Pancreas (tissue), 10 donors: ENCODE measurements at regions of chr6 and their contacts with region 1.

Region 1: GRCh38 chr6:129730477-129731165 is 20.6 kb upstream of the ARHGAP18 start:
- DNase-seq: peak in 1 of 6 donors; percentile 30
- ATAC-seq: peak; percentile 58 to 83 (median 79)
- H3K4me3 ChIP-seq: no peak overlapping the region
- H3K27ac ChIP-seq: no peak overlapping the region
- H3K4me1 ChIP-seq: no peaks in the 10 kb centered on the region
- H3K27me3 ChIP-seq: no peaks in the 10 kb centered on the region
- CTCF ChIP-seq: peak; percentile 19 to 56 (median 46)

Region 2: DNA sequence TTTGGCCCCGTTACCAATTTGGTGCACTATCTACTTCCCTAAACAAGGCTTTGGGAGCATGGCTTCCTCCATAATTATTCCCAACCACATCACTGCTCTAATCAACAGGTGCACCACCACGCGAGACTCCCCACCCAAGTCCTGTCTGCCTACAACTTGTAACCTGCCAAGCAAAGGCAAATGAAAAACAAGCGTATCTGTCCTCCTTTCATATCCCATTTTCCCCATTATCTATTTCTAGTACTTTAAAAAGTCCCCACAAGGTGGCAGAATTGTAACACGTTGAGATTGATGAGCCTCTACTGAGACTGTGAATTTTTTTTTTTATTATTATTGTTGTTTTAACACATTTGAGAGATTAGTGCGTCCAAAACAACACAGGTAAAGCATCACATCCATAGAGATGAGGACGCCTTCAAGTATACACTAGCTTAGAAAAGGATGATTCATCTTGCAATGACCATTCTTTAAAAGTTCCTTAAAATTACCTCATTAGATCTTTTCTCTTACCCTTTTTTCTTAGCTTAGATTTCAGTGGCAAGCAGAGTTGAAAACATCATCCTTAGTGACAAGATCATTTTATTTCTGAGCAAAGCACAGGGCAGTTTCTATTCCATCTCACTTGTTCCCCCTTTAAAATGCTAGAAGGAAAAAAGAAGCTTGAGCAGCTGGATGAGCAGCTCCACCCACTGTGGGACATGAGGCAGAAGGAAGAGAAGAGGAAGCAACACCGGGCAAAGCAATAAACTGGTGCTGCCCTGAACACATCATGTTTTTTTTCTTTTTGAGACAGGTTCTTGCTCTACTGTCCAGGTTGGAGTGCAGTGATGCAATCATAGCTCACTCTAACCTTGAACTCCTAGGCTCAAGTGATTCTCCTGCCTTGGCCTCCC is 231.4 kb before region 1 on chr6:
- intact Hi-C with region 1: loop called in 1 of 3 experiments (anchors 5 kb)
- DNase-seq: no peak
- ATAC-seq: peak; percentile 74 to 86 (median 84)
- H3K4me3 ChIP-seq: no peak overlapping the region
- H3K27ac ChIP-seq: no peak overlapping the region
- H3K4me1 ChIP-seq: peaks cover 0 to 16% (median 0%) of the 10 kb centered on the region in 3 donors
- H3K27me3 ChIP-seq: no peaks in the 10 kb centered on the region
- CTCF ChIP-seq: peak in 3 of 4 donors; percentile 10 to 55 (median 38)

Region 3: GRCh38 chr6:129598244-129599187 is 132.1 kb before region 1 on chr6:
- intact Hi-C with region 1: loop called in 2 of 3 experiments (anchors 5 kb)
- DNase-seq: no peak
- ATAC-seq: peak; percentile 59 to 95 (median 88)
- H3K4me3 ChIP-seq: no peak overlapping the region
- H3K27ac ChIP-seq: no peak overlapping the region
- H3K4me1 ChIP-seq: peaks cover 0 to 5% (median 0%) of the 10 kb centered on the region in 3 donors
- H3K27me3 ChIP-seq: no peaks in the 10 kb centered on the region
- CTCF ChIP-seq: peak; percentile 17 to 62 (median 54)

Region 4: DNA sequence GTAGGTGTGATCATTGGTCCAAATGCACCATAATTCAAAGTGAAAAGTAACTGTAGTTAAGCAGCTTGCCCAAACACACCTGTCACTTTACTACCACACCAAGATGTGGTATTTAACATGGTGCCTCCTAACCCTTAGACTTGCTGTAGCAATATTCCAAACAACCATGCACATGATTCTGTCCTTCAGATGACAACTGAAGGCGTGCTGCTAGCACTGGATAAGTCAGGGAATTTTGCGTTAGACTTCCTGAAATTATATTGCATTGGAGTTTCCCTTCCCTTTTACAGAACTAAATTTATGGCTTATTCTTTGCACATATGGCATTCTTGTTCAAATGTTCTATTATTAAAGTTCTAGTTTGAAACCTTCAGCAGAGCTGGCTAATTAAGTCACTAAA is 126.9 kb before region 1 on chr6:
- intact Hi-C with region 1: loop called in 2 of 3 experiments (anchors 5 kb)
- DNase-seq: no peak
- ATAC-seq: no peak
- H3K4me3 ChIP-seq: no peak overlapping the region
- H3K27ac ChIP-seq: no peak overlapping the region
- H3K4me1 ChIP-seq: no peaks in the 10 kb centered on the region
- H3K27me3 ChIP-seq: no peaks in the 10 kb centered on the region
- CTCF ChIP-seq: no peak